ENCODE measurements at regions of chr22 and their contacts with region 1.

Region 1: GRCh38 chr22:23849009-23850006 is 8.4 kb upstream of the SLC2A11 start:
- DNase-seq: peak; percentile 66
- H3K4me3 Mint-ChIP-seq: no peak overlapping the region
- H3K27ac Mint-ChIP-seq: no peak overlapping the region
- H3K4me1 Mint-ChIP-seq: peaks cover 5% of the 10 kb centered on the region
- H3K27me3 Mint-ChIP-seq: no peaks in the 10 kb centered on the region
- CTCF ChIP-seq: peak; percentile 96

Region 2: GRCh38 chr22:23539135-23539838 is 310.0 kb before region 1 on chr22:
- CTCF ChIA-PET with region 1: interaction called, 11 read pairs
- POLR2A ChIA-PET with region 1: no interaction called
- intact Hi-C with region 1: loop called (anchors 5 kb)
- DNase-seq: peak; percentile 82
- H3K4me3 Mint-ChIP-seq: peak overlapping the region; percentile 16
- H3K27ac Mint-ChIP-seq: no peak overlapping the region
- H3K4me1 Mint-ChIP-seq: peaks cover 7% of the 10 kb centered on the region
- H3K27me3 Mint-ChIP-seq: peaks cover 11% of the 10 kb centered on the region
- CTCF ChIP-seq: peak; percentile 75

Region 3: GRCh38 chr22:23626286-23626975 is 222.9 kb before region 1 on chr22:
- CTCF ChIA-PET with region 1: interaction called, 3 read pairs
- POLR2A ChIA-PET with region 1: no interaction called
- intact Hi-C with region 1: loop called (anchors 5 kb)
- DNase-seq: no peak
- H3K4me3 Mint-ChIP-seq: no peak overlapping the region
- H3K27ac Mint-ChIP-seq: no peak overlapping the region
- H3K4me1 Mint-ChIP-seq: no peaks in the 10 kb centered on the region
- H3K27me3 Mint-ChIP-seq: peaks cover 51% of the 10 kb centered on the region
- CTCF ChIP-seq: no peak

Region 4: DNA sequence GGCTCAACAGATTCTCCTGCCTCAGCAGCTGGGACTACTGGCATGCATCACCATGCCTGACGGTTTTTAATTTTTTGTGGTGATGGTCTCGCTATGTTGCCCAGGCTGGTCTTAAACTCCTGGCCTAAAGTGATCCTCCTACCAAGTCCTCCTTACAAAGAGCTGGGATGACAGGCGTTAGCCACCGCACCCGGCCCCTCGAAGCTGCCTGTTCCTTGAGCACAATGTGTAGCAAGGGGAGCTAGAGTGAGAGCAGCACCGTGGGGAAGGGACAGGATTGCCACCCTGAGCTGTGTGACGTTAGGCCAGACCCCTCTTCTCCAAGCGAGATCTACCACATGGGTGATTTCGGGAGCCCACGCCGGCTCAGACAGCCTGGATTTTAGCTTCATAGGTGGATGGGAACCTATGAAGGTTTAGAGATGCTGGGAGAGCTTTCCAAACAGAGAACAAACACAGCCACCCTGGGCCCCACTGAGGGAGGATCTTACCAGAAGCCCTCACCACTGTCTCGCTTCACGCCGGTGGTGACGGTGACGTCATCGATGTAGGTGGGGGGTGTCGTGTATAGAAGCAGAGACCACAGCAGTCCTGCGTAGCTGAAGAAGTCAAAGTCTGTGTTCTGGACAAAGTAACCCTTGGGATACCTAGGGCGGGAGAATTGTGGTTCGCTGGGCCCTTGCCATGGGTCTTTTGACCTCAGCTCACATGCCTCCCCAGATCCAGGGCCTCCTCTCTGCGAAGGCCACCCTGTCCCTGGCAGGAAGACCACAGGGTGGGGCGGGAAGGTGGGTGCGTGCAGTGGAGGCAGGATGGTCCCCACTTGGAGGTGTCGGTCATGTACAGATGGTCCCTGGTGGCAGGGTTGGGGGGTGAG is 135.4 kb before region 1 on chr22:
- CTCF ChIA-PET with region 1: interaction called, 11 read pairs
- POLR2A ChIA-PET with region 1: interaction called, 3 read pairs
- intact Hi-C with region 1: no loop called
- DNase-seq: no peak
- H3K4me3 Mint-ChIP-seq: no peak overlapping the region
- H3K27ac Mint-ChIP-seq: no peak overlapping the region
- H3K4me1 Mint-ChIP-seq: no peaks in the 10 kb centered on the region
- H3K27me3 Mint-ChIP-seq: no peaks in the 10 kb centered on the region
- CTCF ChIP-seq: no peak

Region 5: DNA sequence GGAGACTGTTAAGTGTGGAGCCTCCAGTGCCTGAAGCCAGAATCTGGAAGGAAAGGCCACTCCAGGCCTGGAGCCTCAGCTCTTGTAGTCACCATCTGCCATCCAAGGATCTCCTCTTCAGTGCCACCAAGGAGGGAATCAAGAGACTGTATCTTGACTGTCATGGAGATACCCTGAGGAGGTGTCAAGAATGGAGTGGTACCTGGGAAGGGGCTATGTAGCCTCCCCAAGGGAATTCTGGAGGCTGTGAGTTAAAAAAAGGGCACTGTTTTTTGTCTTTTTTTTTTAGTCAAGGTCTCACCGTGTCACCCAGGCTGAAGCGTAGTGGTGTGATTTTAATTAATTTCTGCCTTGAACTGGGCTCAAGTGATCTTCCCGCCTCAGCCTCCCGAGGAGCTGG is 89.7 kb before region 1 on chr22:
- CTCF ChIA-PET with region 1: interaction called, 12 read pairs
- POLR2A ChIA-PET with region 1: no interaction called
- intact Hi-C with region 1: no loop called
- DNase-seq: no peak
- H3K4me3 Mint-ChIP-seq: no peak overlapping the region
- H3K27ac Mint-ChIP-seq: no peak overlapping the region
- H3K4me1 Mint-ChIP-seq: no peaks in the 10 kb centered on the region
- H3K27me3 Mint-ChIP-seq: no peaks in the 10 kb centered on the region
- CTCF ChIP-seq: no peak

Region 6: DNA sequence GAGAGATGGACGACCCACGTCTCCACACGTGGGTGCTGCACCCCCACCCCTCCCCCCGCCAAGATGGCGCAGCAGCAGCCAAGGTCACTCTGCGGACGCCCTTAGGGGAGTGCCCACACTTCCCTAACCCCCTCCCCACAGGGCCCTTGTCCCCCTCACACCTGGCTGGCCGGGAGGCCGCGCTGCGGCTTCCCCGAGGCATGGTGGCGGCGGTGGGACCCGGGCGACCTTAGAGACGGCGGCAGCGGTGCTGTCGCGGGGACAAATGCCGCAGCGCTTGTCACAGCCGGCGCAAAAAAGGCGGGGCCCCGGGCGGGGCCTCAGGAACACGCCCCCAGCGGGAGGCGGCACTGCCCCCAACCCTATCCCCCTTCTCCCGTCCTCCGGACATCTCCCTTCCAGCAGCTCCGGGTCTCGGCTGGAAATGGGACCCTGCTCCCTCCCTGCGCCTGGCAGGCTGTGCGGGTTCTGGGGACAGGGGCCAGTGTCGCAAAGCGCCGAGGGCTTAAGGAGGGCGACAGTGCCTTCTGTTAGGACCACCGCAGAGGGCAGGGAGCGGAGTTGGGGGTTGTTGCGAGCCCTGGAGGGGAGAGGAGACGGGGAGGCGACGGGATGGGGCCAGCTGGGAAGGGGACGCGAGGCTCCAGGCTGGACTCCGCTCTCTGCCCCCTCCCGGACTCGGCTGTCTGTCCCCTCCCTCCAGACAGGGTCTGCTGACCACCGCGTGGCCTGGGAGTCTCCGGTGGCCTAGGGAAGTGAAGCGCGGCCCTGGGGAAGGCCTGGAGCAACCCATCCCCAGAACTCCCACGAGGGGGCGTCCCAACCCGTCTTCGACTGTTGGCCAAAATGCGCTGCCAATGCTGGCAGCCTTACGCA is 81.4 kb before region 1 on chr22 and contains the start of gene CHCHD10:
- CTCF ChIA-PET with region 1: interaction called, 53 read pairs
- POLR2A ChIA-PET with region 1: interaction called, 11 read pairs
- intact Hi-C with region 1: loop called (anchors 5 kb)
- DNase-seq: peak; percentile 69
- H3K4me3 Mint-ChIP-seq: peak within 1 kb of the TSS; percentile 69
- H3K27ac Mint-ChIP-seq: no peak within 1 kb of the TSS
- H3K4me1 Mint-ChIP-seq: peaks cover 9% of the 10 kb centered on the region
- H3K27me3 Mint-ChIP-seq: no peaks in the 10 kb centered on the region
- CTCF ChIP-seq: peak; percentile 68
- total RNA-seq, gene CHCHD10: 86.0 and 90.1 TPM in 2 replicates

Region 7: GRCh38 chr22:23826465-23827199 is 22.7 kb before region 1 on chr22:
- CTCF ChIA-PET with region 1: interaction called, 13 read pairs
- POLR2A ChIA-PET with region 1: interaction called, 3 read pairs
- intact Hi-C with region 1: no loop called
- DNase-seq: no peak
- H3K4me3 Mint-ChIP-seq: no peak overlapping the region
- H3K27ac Mint-ChIP-seq: peak overlapping the region; percentile 86
- H3K4me1 Mint-ChIP-seq: peaks cover 6% of the 10 kb centered on the region
- H3K27me3 Mint-ChIP-seq: no peaks in the 10 kb centered on the region
- CTCF ChIP-seq: no peak

Region 8: GRCh38 chr22:23913661-23914353 is 64.5 kb after region 1 on chr22:
- CTCF ChIA-PET with region 1: no interaction called
- POLR2A ChIA-PET with region 1: no interaction called
- intact Hi-C with region 1: no loop called
- DNase-seq: peak; percentile 99
- H3K4me3 Mint-ChIP-seq: peak overlapping the region; percentile 79
- H3K27ac Mint-ChIP-seq: peak overlapping the region; percentile 91
- H3K4me1 Mint-ChIP-seq: peaks cover 7% of the 10 kb centered on the region
- H3K27me3 Mint-ChIP-seq: no peaks in the 10 kb centered on the region
- CTCF ChIP-seq: no peak

Region 9: DNA sequence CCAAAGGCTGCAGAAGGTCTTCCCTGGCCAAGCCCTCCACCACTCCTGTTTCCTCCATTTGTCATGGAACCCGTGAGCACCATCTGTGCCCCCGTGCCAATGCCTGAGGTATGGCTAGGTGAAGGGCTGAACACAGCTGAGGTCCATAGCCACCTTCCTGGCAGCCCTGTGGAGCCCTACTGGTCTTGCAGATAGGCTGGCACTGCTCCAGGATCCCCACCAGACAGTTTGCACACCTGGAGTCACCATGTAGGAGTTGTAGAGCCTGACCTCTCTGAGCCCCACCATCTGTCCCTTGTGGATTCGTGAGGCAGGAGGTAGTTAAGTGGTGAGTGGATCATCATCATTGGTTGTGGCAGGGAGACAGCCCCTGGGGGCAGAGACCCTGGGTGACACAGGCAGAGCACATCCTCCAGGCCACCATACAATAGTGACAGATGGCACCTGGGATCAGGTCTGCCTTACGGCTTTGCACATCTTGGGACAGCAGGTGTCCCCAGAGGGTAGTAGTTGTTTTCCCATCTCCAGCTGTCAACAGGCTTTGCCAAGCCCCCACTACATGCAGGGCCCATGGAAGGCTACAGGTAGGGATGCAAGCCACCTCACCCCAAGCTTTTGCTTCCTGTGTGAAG is 279.4 kb after region 1 on chr22:
- CTCF ChIA-PET with region 1: no interaction called
- POLR2A ChIA-PET with region 1: no interaction called
- intact Hi-C with region 1: no loop called
- DNase-seq: no peak
- H3K4me3 Mint-ChIP-seq: no peak overlapping the region
- H3K27ac Mint-ChIP-seq: no peak overlapping the region
- H3K4me1 Mint-ChIP-seq: no peaks in the 10 kb centered on the region
- H3K27me3 Mint-ChIP-seq: no peaks in the 10 kb centered on the region
- CTCF ChIP-seq: no peak